A673 (cell line): ENCODE measurements at regions of chr10 and their contacts with region 1.

Region 1: DNA sequence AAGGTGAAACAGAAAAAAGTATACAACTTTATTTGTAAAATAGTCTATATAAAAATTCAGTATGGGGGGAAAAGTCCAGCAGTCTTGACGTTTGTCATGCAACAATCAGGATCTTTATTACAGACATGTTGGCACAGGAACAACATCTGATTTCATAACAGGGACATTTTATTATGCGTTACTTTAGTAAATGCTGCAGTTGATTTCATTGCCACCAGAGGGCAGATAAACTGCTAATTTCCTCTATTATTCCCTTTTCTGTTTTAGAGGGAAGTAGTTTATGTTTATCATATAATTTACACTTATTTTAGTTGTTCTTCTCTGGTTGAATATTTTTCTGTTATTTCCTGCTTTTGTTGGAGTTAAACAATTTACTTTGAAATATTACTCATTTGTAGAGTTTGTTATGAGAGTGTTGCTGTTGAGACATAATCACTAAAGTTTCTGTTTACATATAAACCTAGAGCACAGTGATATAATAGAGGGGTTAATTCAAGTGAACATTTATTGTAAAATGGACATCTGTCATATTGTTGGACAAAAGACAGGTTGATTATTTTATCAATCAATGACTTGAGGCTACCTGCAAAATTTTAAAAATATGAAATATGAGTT is 3.3 kb downstream of the PLXDC2 start:
- DNase-seq: peak; percentile 84
- H3K4me3 ChIP-seq: peak overlapping the region; percentile 85
- H3K27ac ChIP-seq: peak overlapping the region; percentile 46
- H3K4me1 ChIP-seq: peaks cover 27% of the 10 kb centered on the region
- H3K27me3 ChIP-seq: no peaks in the 10 kb centered on the region
- CTCF ChIP-seq: peak; percentile 84

Region 2: DNA sequence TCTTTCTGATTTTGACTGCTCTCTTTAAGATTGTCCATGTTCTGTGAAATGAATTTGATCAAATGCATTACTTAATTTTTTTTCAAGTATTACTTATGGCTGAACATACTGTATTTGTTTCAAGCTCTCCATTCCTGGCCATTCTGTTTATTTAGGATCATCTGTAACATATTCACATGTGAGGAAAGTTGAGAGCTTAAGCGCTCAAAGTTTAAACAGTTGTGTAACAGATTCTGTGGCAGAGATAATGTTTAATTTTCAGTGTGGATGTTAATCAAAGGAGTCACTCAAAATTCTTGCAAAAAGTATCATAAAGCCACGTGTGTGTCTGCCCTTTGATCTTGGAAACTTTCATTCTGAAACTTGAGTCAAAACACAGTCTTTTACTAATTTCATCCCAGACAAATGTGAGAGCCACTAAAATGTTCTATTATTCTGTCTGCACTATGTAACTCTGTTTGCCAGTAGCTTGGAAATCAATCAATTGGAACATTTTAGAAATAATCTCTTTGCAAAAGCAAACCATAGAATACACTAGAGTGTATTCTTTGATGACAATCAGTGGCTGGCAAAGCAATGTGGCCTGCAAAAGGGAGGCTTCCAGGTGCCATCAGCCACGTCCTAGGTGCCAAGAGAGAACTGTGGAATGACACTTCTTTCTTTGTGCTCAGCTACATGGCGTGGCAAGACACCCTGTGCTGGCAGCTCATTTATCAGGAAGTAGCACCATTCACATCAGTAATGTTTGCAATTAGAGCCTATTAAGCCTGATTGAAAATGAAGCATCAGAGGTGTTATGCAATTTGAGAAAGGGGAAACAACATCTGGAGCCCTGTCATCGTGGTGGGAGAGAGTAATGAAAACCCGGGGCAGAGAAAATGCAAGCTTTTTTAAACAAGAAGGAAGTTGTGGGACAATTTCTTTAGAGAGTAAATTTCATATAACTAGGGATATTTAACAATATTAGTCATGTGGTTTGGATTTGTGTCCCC is 1119.4 kb before region 1 on chr10:
- CTCF ChIA-PET with region 1: no interaction called
- POLR2A ChIA-PET with region 1: no interaction called
- intact Hi-C with region 1: loop called (anchors 10 kb)
- DNase-seq: no peak
- H3K4me3 ChIP-seq: no peak overlapping the region
- H3K27ac ChIP-seq: no peak overlapping the region
- H3K4me1 ChIP-seq: no peaks in the 10 kb centered on the region
- H3K27me3 ChIP-seq: no peaks in the 10 kb centered on the region
- CTCF ChIP-seq: no peak

Region 3: GRCh38 chr10:19461588-19461987 is 357.9 kb before region 1 on chr10:
- CTCF ChIA-PET with region 1: no interaction called
- POLR2A ChIA-PET with region 1: no interaction called
- intact Hi-C with region 1: no loop called
- DNase-seq: no peak
- H3K4me3 ChIP-seq: no peak overlapping the region
- H3K27ac ChIP-seq: no peak overlapping the region
- H3K4me1 ChIP-seq: no peaks in the 10 kb centered on the region
- H3K27me3 ChIP-seq: peaks cover 5% of the 10 kb centered on the region
- CTCF ChIP-seq: no peak

Region 4: GRCh38 chr10:19952224-19953010 is 132.9 kb after region 1 on chr10:
- CTCF ChIA-PET with region 1: no interaction called
- POLR2A ChIA-PET with region 1: no interaction called
- intact Hi-C with region 1: loop called (anchors 5 kb)
- DNase-seq: peak; percentile 68
- H3K4me3 ChIP-seq: no peak overlapping the region
- H3K27ac ChIP-seq: peak overlapping the region; percentile 31
- H3K4me1 ChIP-seq: peaks cover 46% of the 10 kb centered on the region
- H3K27me3 ChIP-seq: no peaks in the 10 kb centered on the region
- CTCF ChIP-seq: no peak

Region 5: GRCh38 chr10:20147684-20148083 is 328.2 kb after region 1 on chr10:
- CTCF ChIA-PET with region 1: no interaction called
- POLR2A ChIA-PET with region 1: no interaction called
- intact Hi-C with region 1: loop called (anchors 10 kb)
- DNase-seq: peak; percentile 52
- H3K4me3 ChIP-seq: no peak overlapping the region
- H3K27ac ChIP-seq: peak overlapping the region; percentile 74
- H3K4me1 ChIP-seq: peaks cover 42% of the 10 kb centered on the region
- H3K27me3 ChIP-seq: no peaks in the 10 kb centered on the region
- CTCF ChIP-seq: no peak

Region 6: GRCh38 chr10:20771051-20771450 is 951.5 kb after region 1 on chr10:
- CTCF ChIA-PET with region 1: interaction called, 5 read pairs
- POLR2A ChIA-PET with region 1: no interaction called
- intact Hi-C with region 1: loop called (anchors 5 kb)
- DNase-seq: no peak
- H3K4me3 ChIP-seq: no peak overlapping the region
- H3K27ac ChIP-seq: no peak overlapping the region
- H3K4me1 ChIP-seq: peaks cover 11% of the 10 kb centered on the region
- H3K27me3 ChIP-seq: no peaks in the 10 kb centered on the region
- CTCF ChIP-seq: no peak